HEK293 (cell line): ENCODE measurements at regions of chr10 and their contacts with region 1.

Region 1: GRCh38 chr10:122980209-122981065 is at the start of gene PSTK:
- H3K4me3 ChIP-seq: peak within 1 kb of the TSS; percentile 70
- H3K27ac ChIP-seq: peak within 1 kb of the TSS; percentile 94
- H3K4me1 ChIP-seq: no peaks in the 10 kb centered on the region; the same call in 1 of the 2 replicates
- CTCF ChIP-seq: peak; percentile 96

Region 2: GRCh38 chr10:122957474-122957873 is 23.0 kb before region 1 on chr10:
- CTCF ChIA-PET with region 1: interaction called, 14 read pairs
- POLR2A ChIA-PET with region 1: interaction called, 6 read pairs
- H3K4me3 ChIP-seq: no peak overlapping the region
- H3K27ac ChIP-seq: no peak overlapping the region
- H3K4me1 ChIP-seq: peaks cover under 1% of the 10 kb centered on the region; the same call in 1 of the 2 replicates
- CTCF ChIP-seq: no peak

Region 3: DNA sequence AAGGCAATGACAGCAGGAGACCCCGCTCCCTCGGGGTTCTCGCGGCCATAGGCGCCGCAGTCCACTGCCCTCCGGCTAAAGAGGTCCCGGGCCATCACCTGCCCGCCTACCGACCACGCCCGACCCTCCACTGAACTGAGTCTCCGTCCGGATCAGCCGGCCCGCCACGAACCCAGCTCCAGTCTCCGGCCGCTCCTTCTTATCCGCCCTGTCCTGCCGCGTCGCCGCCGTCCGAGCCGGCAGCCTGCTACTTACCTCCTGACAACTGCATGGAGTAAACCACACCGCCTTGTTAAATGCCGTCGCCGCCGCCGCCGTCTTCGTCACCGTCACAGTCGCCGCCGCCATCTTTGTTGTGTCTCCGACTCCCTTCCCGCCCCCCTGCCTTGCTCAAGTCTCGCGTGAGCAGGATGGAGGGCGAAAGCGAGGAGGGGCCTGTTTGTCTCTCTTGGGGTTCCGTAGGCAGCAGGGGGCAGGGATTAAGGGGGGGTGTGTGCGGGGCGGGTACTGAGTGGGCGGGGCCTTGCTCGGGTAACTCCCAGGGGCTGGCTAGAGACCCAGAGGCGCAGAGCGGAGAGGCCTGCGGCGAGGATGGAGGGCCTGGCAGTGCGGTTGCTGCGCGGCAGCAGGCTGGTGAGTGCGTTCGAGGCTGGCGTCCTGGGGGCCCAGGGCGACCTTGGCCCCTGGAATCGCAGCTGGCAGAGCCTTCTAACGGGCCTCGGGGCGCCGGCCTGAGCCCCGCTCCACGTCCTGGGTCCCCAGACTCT is 28.2 kb after region 1 on chr10 and contains the starts of genes ACADSB and IKZF5:
- CTCF ChIA-PET with region 1: interaction called, 14 read pairs
- POLR2A ChIA-PET with region 1: interaction called, 9 read pairs
- H3K4me3 ChIP-seq: peak within 1 kb of the TSS; percentile 100
- H3K27ac ChIP-seq: peak within 1 kb of the TSS; percentile 79
- H3K4me1 ChIP-seq: peaks cover 22% of the 10 kb centered on the region
- CTCF ChIP-seq: no peak